Caco-2 (cell line): ENCODE measurements at regions of chr21 and their contacts with region 1.

Region 1: DNA sequence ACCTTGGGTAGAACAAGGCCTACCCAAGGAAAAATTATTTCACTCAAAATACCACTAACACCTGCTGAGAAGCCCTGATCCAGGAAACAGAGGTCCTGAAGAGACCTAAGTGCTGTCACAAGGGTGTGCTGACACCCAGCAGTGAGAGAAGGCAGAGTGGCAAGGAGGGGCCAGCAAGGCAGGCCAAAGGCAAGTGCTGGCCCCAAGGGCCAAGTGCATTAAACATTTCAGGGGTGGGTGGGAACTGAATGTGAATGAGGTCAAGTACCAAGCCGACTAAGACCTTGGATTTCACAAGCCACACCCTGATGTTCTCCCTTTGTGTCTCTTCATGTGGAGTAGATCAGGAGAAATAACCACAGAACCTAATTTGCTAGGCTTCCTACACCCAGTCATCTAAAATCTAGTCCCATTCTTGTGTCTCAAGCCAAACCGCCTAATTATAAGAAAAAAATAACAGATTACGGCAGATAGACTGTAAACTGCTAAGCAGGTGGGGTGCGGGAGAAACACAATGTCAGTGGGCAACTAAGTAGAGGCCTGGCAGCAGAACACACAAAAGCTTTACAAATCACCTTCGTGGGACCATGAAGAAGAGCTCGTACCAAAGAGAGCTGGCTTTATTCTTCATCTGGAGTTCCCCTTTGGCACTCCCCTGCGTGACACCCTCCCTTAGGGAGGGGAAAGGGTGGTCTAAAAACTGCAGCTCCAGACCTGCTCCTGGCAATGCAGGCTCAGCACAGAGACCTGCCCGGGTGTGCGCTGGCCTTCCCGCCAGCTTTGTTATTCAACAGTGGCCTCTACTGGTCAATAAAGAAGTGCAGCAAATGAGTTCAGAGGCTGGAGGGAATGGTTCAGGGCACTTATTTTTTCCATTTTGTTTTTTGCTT is 8.7 kb downstream of the UBE2G2 start:
- DNase-seq: peak; percentile 55 to 75
- H3K4me3 ChIP-seq: no peak overlapping the region
- H3K4me3 Mint-ChIP-seq: peak overlapping the region; percentile 40
- H3K27ac Mint-ChIP-seq: peak overlapping the region; percentile 53
- H3K4me1 ChIP-seq: peaks cover 24% of the 10 kb centered on the region
- H3K4me1 Mint-ChIP-seq: peaks cover 19% of the 10 kb centered on the region
- H3K27me3 ChIP-seq: no peaks in the 10 kb centered on the region
- H3K27me3 Mint-ChIP-seq: no peaks in the 10 kb centered on the region
- CTCF ChIP-seq: peak; percentile 77

Region 2: DNA sequence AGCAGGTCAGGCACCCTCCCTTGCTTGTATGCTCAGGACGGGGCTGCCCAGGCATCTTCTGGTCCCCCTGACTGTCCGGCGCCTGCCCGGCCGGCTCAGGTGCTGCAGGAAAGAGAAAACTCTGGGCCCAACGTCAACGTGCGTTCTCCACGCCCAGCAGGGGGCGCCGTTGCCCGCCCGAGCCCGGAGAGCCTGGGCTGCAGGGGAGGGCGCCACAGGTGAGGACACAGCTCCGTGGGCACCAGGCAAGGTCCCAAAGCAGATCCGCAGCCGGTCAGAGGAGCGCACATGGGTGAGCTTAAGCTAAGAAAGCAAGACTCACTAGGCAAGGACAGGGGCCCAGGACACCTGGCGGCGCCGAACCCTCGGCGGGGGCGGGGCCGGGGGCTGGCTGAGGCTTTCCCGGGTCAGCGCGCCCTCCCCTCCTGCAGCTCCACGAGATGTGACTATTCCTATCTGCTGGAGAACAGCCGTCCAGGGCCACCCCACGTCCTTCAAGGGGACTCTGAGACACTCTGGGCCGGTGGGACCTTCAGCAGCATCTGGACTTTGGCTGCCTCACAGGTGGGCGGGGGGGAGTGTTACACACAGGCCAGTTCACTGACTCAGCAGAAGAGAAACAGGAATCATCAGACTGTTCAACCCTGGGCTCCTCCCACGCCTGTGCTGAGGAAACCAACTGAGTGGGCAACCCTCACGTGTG is 282.3 kb before region 1 on chr21:
- CTCF ChIA-PET with region 1: interaction called, 46 read pairs
- POLR2A ChIA-PET with region 1: interaction called, 3 read pairs
- intact Hi-C with region 1: loop called (anchors 10 kb)
- DNase-seq: peak; percentile 79 to 89
- H3K4me3 ChIP-seq: peak overlapping the region; percentile 49
- H3K4me3 Mint-ChIP-seq: peak overlapping the region; percentile 62
- H3K27ac Mint-ChIP-seq: no peak overlapping the region
- H3K4me1 ChIP-seq: peaks cover 7% of the 10 kb centered on the region
- H3K4me1 Mint-ChIP-seq: no peaks in the 10 kb centered on the region
- H3K27me3 ChIP-seq: no peaks in the 10 kb centered on the region
- H3K27me3 Mint-ChIP-seq: no peaks in the 10 kb centered on the region
- CTCF ChIP-seq: peak; percentile 90 to 92

Region 3: GRCh38 chr21:44742418-44743153 is 50.4 kb before region 1 on chr21:
- CTCF ChIA-PET with region 1: interaction called, 13 read pairs
- POLR2A ChIA-PET with region 1: no interaction called
- intact Hi-C with region 1: no loop called
- DNase-seq: peak in 1 of 2 experiments; percentile 40
- H3K4me3 ChIP-seq: no peak overlapping the region
- H3K4me3 Mint-ChIP-seq: no peak overlapping the region
- H3K27ac Mint-ChIP-seq: no peak overlapping the region
- H3K4me1 ChIP-seq: no peaks in the 10 kb centered on the region
- H3K4me1 Mint-ChIP-seq: no peaks in the 10 kb centered on the region
- H3K27me3 ChIP-seq: no peaks in the 10 kb centered on the region
- H3K27me3 Mint-ChIP-seq: peaks cover 1% of the 10 kb centered on the region
- CTCF ChIP-seq: peak in 1 of 2 experiments; percentile 49

Region 4: DNA sequence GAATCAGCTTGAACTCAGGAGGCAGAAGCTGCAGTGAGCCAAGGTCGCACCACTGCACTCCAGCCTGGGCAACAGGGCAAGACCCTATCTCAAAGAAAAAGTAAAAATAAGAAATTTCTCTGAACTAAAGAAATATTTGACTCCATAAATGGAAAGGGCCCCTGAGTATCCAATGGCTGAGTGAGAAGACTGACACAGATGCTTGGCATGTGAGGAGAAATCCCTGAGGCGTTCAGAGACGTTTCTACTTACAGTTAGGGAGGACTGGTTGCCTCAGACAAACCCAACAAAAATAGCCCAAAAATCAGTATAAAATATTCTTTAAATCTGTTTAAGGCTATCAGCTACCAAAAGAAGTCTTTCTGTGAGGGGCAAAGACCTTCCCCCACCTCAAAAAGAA is 27.9 kb after region 1 on chr21:
- CTCF ChIA-PET with region 1: no interaction called
- POLR2A ChIA-PET with region 1: no interaction called
- intact Hi-C with region 1: no loop called
- DNase-seq: no peak
- H3K4me3 ChIP-seq: no peak overlapping the region
- H3K4me3 Mint-ChIP-seq: no peak overlapping the region
- H3K27ac Mint-ChIP-seq: no peak overlapping the region
- H3K4me1 ChIP-seq: peaks cover 15% of the 10 kb centered on the region
- H3K4me1 Mint-ChIP-seq: peaks cover 5% of the 10 kb centered on the region
- H3K27me3 ChIP-seq: no peaks in the 10 kb centered on the region
- H3K27me3 Mint-ChIP-seq: no peaks in the 10 kb centered on the region
- CTCF ChIP-seq: no peak